ENCODE measurements at regions of chr4 and their contacts with region 1.

Region 1: DNA sequence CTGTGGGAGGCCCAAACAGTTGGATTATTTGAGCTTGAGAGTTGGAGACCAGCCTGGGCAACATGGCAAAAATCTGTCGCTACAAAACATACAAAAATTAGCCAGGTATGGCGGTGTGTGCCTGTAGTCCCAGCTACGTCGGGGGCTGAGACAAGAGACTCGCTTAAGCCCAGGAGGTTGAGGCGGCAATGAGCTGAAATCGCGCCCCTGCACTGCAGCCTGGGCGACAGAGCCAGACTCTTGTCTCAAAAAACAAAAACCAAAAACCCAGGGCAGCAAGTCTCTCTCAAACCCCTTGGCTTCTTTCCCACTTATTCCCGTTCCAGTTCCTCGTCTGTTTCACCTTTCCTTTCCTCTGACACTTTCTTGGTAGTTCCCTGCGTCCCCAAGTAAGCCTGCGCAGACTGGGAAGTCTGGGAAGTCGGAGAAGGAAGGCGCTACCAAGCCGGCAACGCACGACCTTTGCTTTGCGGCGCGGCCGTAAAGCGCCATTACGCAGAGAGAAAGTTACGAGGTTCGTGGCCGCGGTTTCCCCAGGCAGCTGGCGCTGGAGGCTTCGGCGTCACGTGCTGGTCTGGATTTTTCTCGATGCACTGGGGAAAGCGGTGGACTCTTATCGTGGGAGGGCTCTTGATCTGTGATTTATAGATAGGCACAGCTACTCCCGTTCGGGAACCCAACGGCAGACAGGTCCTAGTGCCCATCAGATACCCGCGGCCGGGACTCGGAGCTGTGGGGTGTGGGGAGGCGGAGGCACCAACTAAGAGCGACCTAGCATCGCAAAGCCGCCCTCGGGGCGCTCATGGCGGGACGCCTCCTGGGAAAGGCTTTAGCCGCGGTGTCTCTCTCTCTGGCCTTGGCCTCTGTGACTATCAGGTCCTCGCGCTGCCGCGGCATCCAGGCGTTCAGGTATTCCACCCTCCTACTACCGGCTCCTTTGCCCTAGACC is at the start of gene NUDT9:
- DNase-seq: peak; percentile 84 to 96 (median 90)
- ATAC-seq: peak; percentile 92
- H3K4me3 ChIP-seq: peak within 1 kb of the TSS; percentile 56
- H3K27ac ChIP-seq: peak within 1 kb of the TSS; percentile 87
- H3K4me1 ChIP-seq: peaks cover 4 to 13% of the 10 kb centered on the region in 2 experiments; a peak in 3 of 5 replicates
- H3K27me3 ChIP-seq: no peaks in the 10 kb centered on the region
- CTCF ChIP-seq: no peak
- EP300 ChIP-seq: peak; percentile 45; the same call in 1 of the 2 replicates
- POLR2A ChIP-seq: peak; percentile 96
- RAD21 ChIP-seq: 0 out of 4 replicates have a peak, but pooled peaks have one; percentile 5 to 11
- polyA plus RNA-seq, gene NUDT9: 8.5 to 16.3 TPM

Region 2: DNA sequence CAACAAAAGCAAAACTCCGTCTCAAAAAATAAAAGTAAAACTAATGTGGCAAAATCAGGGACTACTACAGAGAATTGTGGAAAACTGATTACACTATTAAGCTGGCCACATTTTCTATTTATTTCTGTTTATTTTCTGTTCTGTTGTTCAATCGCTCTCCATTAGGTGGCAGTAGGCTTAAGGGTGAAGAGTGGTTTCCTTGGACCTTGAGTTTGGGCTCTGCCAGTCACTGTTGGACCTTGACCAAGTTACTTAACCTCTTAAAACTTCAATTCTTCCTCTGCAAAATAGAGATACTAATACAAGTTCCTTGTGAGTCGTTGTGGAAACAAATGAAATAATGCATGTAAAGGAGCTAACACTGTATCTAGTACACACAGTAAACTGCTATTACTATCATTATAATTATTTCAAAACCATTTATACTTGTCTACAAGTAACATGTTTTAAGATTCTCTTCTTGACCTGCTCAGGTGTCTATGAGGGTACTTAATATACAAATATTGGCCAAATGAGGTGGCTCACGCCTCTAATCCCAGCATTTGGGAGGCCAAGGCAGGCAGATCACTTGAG is 46.6 kb before region 1 on chr4:
- CTCF ChIA-PET with region 1: interaction called, 10 read pairs
- POLR2A ChIA-PET with region 1: no interaction called
- in situ Hi-C with region 1: no loop called
- intact Hi-C with region 1: loop called (anchors 1 kb)
- DNase-seq: peak in 3 of 4 experiments; percentile 24 to 63 (median 28)
- ATAC-seq: peak; percentile 86
- H3K4me3 ChIP-seq: no peak overlapping the region
- H3K27ac ChIP-seq: no peak overlapping the region
- H3K4me1 ChIP-seq: no peaks in the 10 kb centered on the region
- H3K27me3 ChIP-seq: no peaks in the 10 kb centered on the region
- CTCF ChIP-seq: peak; percentile 65 to 82 (median 65)
- EP300 ChIP-seq: no peak
- POLR2A ChIP-seq: no peak
- RAD21 ChIP-seq: peak; percentile 74 to 79

Region 3: GRCh38 chr4:87390891-87391575 is 31.3 kb before region 1 on chr4 and contains the start of gene HSD17B11:
- CTCF ChIA-PET with region 1: no interaction called
- POLR2A ChIA-PET with region 1: interaction called, 33 read pairs
- in situ Hi-C with region 1: no loop called
- intact Hi-C with region 1: loop called (anchors 1 kb)
- DNase-seq: peak; percentile 81 to 97 (median 88)
- ATAC-seq: peak; percentile 95
- H3K4me3 ChIP-seq: peak within 1 kb of the TSS; percentile 64
- H3K27ac ChIP-seq: peak within 1 kb of the TSS; percentile 88
- H3K4me1 ChIP-seq: peaks cover 0 to 8% of the 10 kb centered on the region in 2 experiments; a peak in 3 of 5 replicates
- H3K27me3 ChIP-seq: no peaks in the 10 kb centered on the region
- CTCF ChIP-seq: peak in 2 of 3 experiments; percentile 13 to 22; a peak in 3 of 6 replicates
- EP300 ChIP-seq: peak; percentile 46
- POLR2A ChIP-seq: peak; percentile 92
- RAD21 ChIP-seq: no peak
- polyA plus RNA-seq, gene HSD17B11: 106 to 108 TPM

Measured in K562 (cell line).